ENCODE measurements at regions of chr17 and their contacts with region 1.

Region 1: GRCh38 chr17:45135192-45135977 is at the start of gene ACBD4:
- DNase-seq: peak; percentile 95 to 100 (median 98)
- ATAC-seq: peak; percentile 93
- H3K4me3 ChIP-seq: peak within 1 kb of the TSS; percentile 94
- H3K4me3 Mint-ChIP-seq: peak within 1 kb of the TSS; percentile 87 to 95 (median 90)
- H3K27ac ChIP-seq: peak within 1 kb of the TSS; percentile 76
- H3K27ac Mint-ChIP-seq: peak within 1 kb of the TSS; percentile 75 to 92 (median 82)
- H3K4me1 ChIP-seq: peaks cover 12% of the 10 kb centered on the region in 2 donors
- H3K4me1 Mint-ChIP-seq: peaks cover 9 to 25% (median 21%) of the 10 kb centered on the region in 7 donors
- H3K27me3 ChIP-seq: no peaks in the 10 kb centered on the region
- H3K27me3 Mint-ChIP-seq: peaks cover 0 to 8% (median 0%) of the 10 kb centered on the region in 5 donors
- total RNA-seq, gene ACBD4: 17.9 to 59.5 (median 31.3) TPM

Region 2: GRCh38 chr17:45060797-45061605 is 74.4 kb before region 1 on chr17 and contains the start of gene NMT1:
- CTCF ChIA-PET with region 1: interaction called, 7 read pairs
- POLR2A ChIA-PET with region 1: interaction called, 4 read pairs
- intact Hi-C with region 1: loop called (anchors 1 kb)
- DNase-seq: peak; percentile 81 to 98 (median 98)
- ATAC-seq: peak; percentile 95
- H3K4me3 ChIP-seq: peak within 1 kb of the TSS; percentile 97
- H3K4me3 Mint-ChIP-seq: peak within 1 kb of the TSS; percentile 80 to 100 (median 98)
- H3K27ac ChIP-seq: peak within 1 kb of the TSS; percentile 87
- H3K27ac Mint-ChIP-seq: peak within 1 kb of the TSS; percentile 88 to 99 (median 97)
- H3K4me1 ChIP-seq: peaks cover 18 to 20% of the 10 kb centered on the region in 2 donors
- H3K4me1 Mint-ChIP-seq: peaks cover 26 to 66% (median 53%) of the 10 kb centered on the region in 7 donors
- H3K27me3 ChIP-seq: no peaks in the 10 kb centered on the region
- H3K27me3 Mint-ChIP-seq: no peaks in the 10 kb centered on the region
- total RNA-seq, gene NMT1: 59.5 to 136 (median 121) TPM

Region 3: GRCh38 chr17:45155029-45155428 is 19.6 kb after region 1 on chr17:
- CTCF ChIA-PET with region 1: interaction called, 114 read pairs
- POLR2A ChIA-PET with region 1: interaction called, 232 read pairs
- intact Hi-C with region 1: loop called in 1 of 2 experiments (anchors 1 kb)
- DNase-seq: no peak
- ATAC-seq: no peak
- H3K4me3 ChIP-seq: no peak overlapping the region
- H3K4me3 Mint-ChIP-seq: no peak overlapping the region
- H3K27ac ChIP-seq: peak overlapping the region; percentile 40
- H3K27ac Mint-ChIP-seq: peak overlapping the region in 2 of 9 donors; percentile 19 to 81
- H3K4me1 ChIP-seq: peaks cover 18 to 32% of the 10 kb centered on the region in 2 donors
- H3K4me1 Mint-ChIP-seq: peaks cover 30 to 62% (median 49%) of the 10 kb centered on the region in 7 donors
- H3K27me3 ChIP-seq: no peaks in the 10 kb centered on the region
- H3K27me3 Mint-ChIP-seq: no peaks in the 10 kb centered on the region

Region 4: GRCh38 chr17:45172454-45173286 is 37.3 kb after region 1 on chr17:
- CTCF ChIA-PET with region 1: interaction called, 17 read pairs
- POLR2A ChIA-PET with region 1: interaction called, 10 read pairs
- intact Hi-C with region 1: no loop called
- DNase-seq: peak in 8 of 9 donors; percentile 45 to 61 (median 55)
- ATAC-seq: peak; percentile 79
- H3K4me3 ChIP-seq: peak overlapping the region; percentile 65
- H3K4me3 Mint-ChIP-seq: peak overlapping the region; percentile 71 to 95 (median 86)
- H3K27ac ChIP-seq: peak overlapping the region; percentile 63
- H3K27ac Mint-ChIP-seq: peak overlapping the region; percentile 63 to 98 (median 94)
- H3K4me1 ChIP-seq: peaks cover 7 to 14% of the 10 kb centered on the region in 2 donors
- H3K4me1 Mint-ChIP-seq: peaks cover 8 to 31% (median 24%) of the 10 kb centered on the region in 7 donors
- H3K27me3 ChIP-seq: no peaks in the 10 kb centered on the region
- H3K27me3 Mint-ChIP-seq: no peaks in the 10 kb centered on the region

Region 5: GRCh38 chr17:45218895-45219661 is 83.7 kb after region 1 on chr17:
- CTCF ChIA-PET with region 1: interaction called, 10 read pairs
- POLR2A ChIA-PET with region 1: interaction called, 4 read pairs
- intact Hi-C with region 1: no loop called
- DNase-seq: peak; percentile 74 to 89 (median 81)
- ATAC-seq: peak; percentile 74
- H3K4me3 ChIP-seq: peak overlapping the region; percentile 72
- H3K4me3 Mint-ChIP-seq: peak overlapping the region; percentile 81 to 99 (median 90)
- H3K27ac ChIP-seq: peak overlapping the region; percentile 96
- H3K27ac Mint-ChIP-seq: peak overlapping the region; percentile 37 to 94 (median 87)
- H3K4me1 ChIP-seq: peaks cover 24 to 30% of the 10 kb centered on the region in 2 donors
- H3K4me1 Mint-ChIP-seq: peaks cover 29 to 52% (median 37%) of the 10 kb centered on the region in 7 donors
- H3K27me3 ChIP-seq: no peaks in the 10 kb centered on the region
- H3K27me3 Mint-ChIP-seq: no peaks in the 10 kb centered on the region

Region 6: DNA sequence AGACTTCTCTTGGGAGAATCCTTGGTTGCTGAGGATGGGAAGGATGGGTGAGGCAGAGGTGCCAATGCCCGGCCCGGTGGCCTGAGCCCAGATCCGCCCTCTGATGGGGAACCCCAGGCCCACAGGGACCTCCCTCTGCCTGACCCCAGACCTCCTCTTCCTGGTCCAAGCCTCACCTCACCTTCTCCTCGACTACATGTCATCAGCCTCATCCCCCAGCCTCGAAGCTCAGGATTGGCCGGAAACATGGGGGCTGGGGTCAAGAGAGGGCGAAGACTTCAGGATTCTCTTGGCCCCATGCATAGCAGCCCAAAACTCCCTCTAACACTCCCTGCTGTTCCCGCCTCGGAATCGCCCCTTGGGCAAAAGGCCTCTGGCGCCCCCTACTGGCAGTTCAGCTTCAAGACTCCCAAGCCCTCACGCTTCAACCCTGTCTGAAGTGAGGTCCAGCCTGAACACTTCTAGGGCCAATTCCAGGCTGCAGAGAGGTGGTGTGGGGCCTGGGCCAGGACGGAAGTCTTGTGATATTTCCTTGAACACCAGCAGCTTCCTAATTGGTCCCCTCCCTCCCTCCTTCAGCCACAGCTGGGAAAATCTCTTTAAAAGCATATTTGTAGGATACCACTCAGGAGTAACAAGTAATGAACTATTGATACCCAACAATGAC is 250.1 kb after region 1 on chr17:
- CTCF ChIA-PET with region 1: no interaction called
- POLR2A ChIA-PET with region 1: no interaction called
- intact Hi-C with region 1: loop called in 1 of 2 experiments (anchors 1 kb)
- DNase-seq: peak; percentile 70 to 92 (median 85)
- ATAC-seq: peak; percentile 96
- H3K4me3 ChIP-seq: no peak overlapping the region
- H3K4me3 Mint-ChIP-seq: peak overlapping the region in 1 of 10 donors; percentile 37
- H3K27ac ChIP-seq: no peak overlapping the region
- H3K27ac Mint-ChIP-seq: peak overlapping the region in 3 of 9 donors; percentile 2 to 91 (median 58)
- H3K4me1 ChIP-seq: peaks cover 0 to 10% of the 10 kb centered on the region in 2 donors
- H3K4me1 Mint-ChIP-seq: peaks cover 11 to 23% (median 15%) of the 10 kb centered on the region in 7 donors
- H3K27me3 ChIP-seq: no peaks in the 10 kb centered on the region
- H3K27me3 Mint-ChIP-seq: peaks cover 0 to 14% (median 5%) of the 10 kb centered on the region in 5 donors